Left cardiac atrium (tissue), 4 donors: ENCODE measurements at regions of chr5 and their contacts with region 1.

Region 1: DNA sequence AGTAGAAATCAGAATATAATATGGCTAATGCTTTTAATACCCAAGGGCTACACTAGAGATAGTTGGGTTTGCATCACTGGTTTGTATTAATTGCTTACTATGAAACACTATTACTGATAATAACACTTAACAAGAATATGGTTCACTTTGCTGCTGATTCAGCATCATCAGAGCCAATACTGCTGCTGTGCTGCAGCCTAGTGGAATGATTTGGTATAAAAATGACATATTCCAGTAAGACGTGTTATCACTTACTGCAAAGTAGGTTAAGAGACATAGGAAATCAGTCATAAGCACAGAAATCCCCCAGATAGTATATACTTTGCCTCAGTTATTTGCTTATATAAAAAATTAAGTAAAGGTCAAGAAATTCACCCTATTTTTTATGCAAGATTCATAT is 2.8 kb downstream of the CDH10 start:
- DNase-seq: no peak
- ATAC-seq: peak; percentile 23 to 67

Region 2: GRCh38 chr5:24232929-24233498 is 409.0 kb before region 1 on chr5:
- intact Hi-C with region 1: loop called in 1 of 2 experiments (anchors 5 kb)
- DNase-seq: no peak
- ATAC-seq: no peak

Region 3: GRCh38 chr5:24444414-24444813 is 197.6 kb before region 1 on chr5:
- intact Hi-C with region 1: loop called in 1 of 2 experiments (anchors 5 kb)
- DNase-seq: peak; percentile 22
- ATAC-seq: peak; percentile 83 to 88

Region 4: DNA sequence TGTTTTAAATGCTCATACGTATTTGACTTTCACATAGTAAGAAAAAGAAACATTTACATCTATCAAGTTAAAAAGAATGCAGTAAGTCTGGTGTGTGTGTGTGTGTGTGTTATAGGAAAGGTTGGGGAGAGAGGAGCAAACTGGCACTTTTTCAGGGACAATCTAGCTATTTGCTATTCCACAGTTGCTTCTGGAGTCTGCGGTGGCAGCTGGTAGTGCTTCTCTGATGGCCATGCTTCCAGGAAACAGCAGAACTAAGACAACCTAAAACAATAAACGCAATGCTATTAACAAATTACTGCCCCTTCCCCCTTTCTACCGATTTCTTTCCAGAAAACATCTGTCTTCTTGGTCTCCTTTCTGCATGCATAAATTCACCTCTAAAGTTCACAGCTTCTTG is 72.7 kb after region 1 on chr5:
- intact Hi-C with region 1: no loop called
- DNase-seq: no peak
- ATAC-seq: no peak